ENCODE measurements at regions of chr12 and their contacts with region 1.

Region 1: GRCh38 chr12:57238854-57239554 is 9.5 kb downstream of the SHMT2 start:
- DNase-seq: peak; percentile 90
- ATAC-seq: peak; percentile 64
- H3K4me3 Mint-ChIP-seq: peak overlapping the region; percentile 83
- H3K27ac Mint-ChIP-seq: peak overlapping the region; percentile 40
- H3K4me1 Mint-ChIP-seq: peaks cover 91% of the 10 kb centered on the region
- H3K27me3 Mint-ChIP-seq: peaks cover 43% of the 10 kb centered on the region

Region 2: DNA sequence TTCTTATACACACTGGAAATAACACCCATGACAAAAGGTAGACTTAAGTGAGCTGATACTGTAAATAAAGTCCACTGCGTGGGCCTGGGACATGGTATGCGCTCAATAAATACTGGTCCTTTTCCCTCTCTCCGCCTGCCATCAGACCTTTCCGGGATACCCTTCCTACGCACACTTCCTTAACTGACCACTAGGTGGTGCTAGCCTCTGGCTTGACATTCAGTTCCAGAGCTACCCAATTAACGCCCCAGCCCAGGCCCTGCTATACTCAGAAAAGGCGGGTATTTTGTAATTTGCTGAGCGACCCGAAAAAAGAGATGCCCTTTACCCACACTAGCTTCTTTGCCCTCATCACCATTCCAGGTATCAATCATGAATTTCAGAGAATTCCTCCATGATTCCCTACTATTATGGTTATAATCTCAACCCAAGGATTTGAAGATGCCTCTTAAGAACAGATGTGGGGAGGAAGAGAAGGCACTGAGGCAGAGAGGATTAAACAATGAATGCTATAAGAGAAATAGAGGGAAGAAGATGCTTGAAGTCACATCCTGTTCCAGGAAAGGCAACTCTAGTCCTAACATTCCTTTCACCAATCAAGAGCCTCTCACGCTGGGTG is 114.6 kb before region 1 on chr12:
- CTCF ChIA-PET with region 1: interaction called, 17 read pairs
- POLR2A ChIA-PET with region 1: interaction called, 3 read pairs
- DNase-seq: peak; percentile 85
- ATAC-seq: peak; percentile 65
- H3K4me3 Mint-ChIP-seq: no peak overlapping the region
- H3K27ac Mint-ChIP-seq: no peak overlapping the region
- H3K4me1 Mint-ChIP-seq: peaks cover 5% of the 10 kb centered on the region
- H3K27me3 Mint-ChIP-seq: peaks cover 29% of the 10 kb centered on the region

Region 3: DNA sequence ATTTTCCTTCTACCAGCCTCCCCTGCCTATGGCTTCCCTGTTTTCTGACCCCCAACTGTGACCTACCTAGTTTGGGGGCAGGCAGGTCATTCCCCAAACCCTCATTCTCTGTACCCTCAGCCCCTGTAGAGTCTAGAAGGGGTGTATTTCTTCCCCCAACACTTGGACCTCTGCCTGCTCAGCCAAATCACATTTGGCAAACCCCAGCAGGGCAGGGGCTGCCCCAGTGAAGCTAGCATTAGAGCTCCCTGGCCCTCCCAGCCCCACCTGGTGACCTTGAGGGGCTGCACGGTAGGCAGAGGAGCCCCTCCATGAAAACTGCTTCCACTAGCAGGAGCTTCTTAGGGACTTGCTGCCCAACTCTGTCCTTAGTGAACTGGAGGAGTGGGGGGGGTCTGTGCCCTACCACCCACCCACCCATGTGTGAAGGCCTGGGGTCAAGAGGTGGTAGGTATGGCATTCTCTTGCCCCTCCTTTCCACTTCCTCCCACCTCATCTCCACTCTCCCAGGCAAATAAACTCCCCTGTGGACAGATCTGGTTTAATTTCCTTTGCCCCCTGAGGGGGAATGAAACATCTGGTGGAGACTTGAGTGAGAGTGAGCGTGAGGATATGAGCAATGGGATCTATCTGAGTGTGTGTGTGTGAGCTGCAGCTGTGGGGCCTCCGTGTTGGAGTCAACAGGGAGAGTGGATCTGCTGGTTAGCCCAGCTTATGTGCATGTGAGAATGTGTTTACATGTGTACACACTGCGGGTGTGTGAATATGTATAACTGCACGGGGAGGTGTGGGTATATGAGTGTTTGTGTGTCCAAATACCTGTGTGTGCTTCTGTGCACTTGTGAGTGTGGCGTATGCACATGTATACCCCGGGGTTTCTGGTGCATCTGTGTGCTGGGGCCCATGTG is 20.7 kb before region 1 on chr12:
- CTCF ChIA-PET with region 1: interaction called, 389 read pairs
- POLR2A ChIA-PET with region 1: interaction called, 7 read pairs
- DNase-seq: no peak
- ATAC-seq: no peak
- H3K4me3 Mint-ChIP-seq: no peak overlapping the region
- H3K27ac Mint-ChIP-seq: no peak overlapping the region
- H3K4me1 Mint-ChIP-seq: peaks cover 61% of the 10 kb centered on the region
- H3K27me3 Mint-ChIP-seq: peaks cover 86% of the 10 kb centered on the region

Region 4: DNA sequence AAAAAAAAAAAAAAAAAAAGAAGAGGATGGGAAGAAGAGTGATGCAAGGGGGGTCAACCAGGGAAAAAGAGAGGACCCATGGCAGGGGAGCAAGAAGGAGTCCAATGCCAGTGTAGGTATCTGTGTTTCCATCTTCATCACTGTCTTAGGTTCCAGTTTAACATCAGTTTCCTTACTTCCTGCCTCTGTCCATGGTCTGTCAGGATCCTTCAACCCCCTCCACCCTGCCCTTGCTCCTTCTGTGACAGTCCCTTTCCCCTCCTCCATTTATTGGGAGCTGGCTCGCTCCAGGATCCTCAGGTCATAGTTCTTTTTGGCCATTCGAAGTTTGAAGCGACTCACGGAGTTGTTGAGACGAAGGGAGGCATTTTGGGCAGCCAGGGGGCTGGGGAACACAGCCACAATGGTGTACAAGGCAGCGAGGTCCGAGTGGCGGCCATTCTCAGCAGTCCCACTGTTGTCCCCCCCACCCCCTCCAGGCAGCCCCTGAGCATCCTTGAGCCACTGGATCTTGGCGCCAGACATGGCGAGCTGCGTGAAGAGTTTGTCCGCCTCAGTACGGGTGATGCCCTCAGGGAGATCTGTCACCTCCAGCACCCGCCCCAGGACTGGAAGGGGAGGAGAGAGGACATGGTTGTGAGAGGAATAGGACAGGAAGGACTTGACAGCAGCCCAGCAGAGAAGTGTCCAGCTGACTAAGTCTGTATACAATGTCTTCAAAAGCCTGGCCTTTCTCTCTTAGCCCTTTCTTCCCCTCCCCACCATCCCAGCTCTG is 15.7 kb after region 1 on chr12:
- CTCF ChIA-PET with region 1: interaction called, 31 read pairs
- POLR2A ChIA-PET with region 1: interaction called, 3 read pairs
- DNase-seq: no peak
- ATAC-seq: no peak
- H3K4me3 Mint-ChIP-seq: no peak overlapping the region
- H3K27ac Mint-ChIP-seq: no peak overlapping the region
- H3K4me1 Mint-ChIP-seq: no peaks in the 10 kb centered on the region
- H3K27me3 Mint-ChIP-seq: no peaks in the 10 kb centered on the region

Region 5: GRCh38 chr12:57315681-57316080 is 76.7 kb after region 1 on chr12:
- CTCF ChIA-PET with region 1: no interaction called
- POLR2A ChIA-PET with region 1: no interaction called
- DNase-seq: no peak
- ATAC-seq: no peak
- H3K4me3 Mint-ChIP-seq: no peak overlapping the region
- H3K27ac Mint-ChIP-seq: no peak overlapping the region
- H3K4me1 Mint-ChIP-seq: peaks cover 8% of the 10 kb centered on the region
- H3K27me3 Mint-ChIP-seq: no peaks in the 10 kb centered on the region

Region 6: DNA sequence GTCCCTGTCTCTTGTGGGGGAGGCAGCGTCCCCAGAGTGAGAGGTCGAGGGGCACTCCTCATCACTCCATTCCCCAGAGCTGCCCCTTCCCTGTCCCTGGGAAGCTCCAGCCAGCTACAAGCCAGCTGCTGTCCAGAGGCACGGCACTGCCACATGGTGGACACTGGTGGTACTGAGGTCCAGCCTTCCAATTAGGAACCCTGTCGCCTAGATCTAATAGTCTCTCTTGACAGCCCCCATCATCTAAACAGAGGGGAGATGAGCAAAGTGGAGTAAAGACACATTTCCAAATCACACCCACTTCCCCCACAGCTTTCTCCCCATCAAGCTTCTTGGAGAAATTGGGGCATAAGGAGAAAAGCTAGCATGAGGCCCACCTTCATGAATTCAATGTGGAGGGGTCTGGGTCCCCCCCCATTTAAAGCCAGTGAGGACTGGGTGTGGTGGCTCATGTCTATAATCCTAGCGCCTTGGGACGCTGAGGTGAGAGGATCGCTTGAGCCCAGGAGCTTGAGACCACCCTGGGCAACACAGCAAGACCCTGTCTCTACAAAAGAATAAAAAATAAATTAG is 214.0 kb after region 1 on chr12:
- CTCF ChIA-PET with region 1: interaction called, 31 read pairs
- POLR2A ChIA-PET with region 1: no interaction called
- DNase-seq: peak; percentile 70
- ATAC-seq: peak; percentile 54
- H3K4me3 Mint-ChIP-seq: no peak overlapping the region
- H3K27ac Mint-ChIP-seq: no peak overlapping the region
- H3K4me1 Mint-ChIP-seq: peaks cover 30% of the 10 kb centered on the region
- H3K27me3 Mint-ChIP-seq: no peaks in the 10 kb centered on the region